Activated naive CD4-positive, alpha-beta T cell treated with anti-CD3 and anti-CD28 coated beads for 36 hours (primary cell): ENCODE measurements at regions of chr7 and their contacts with region 1.

Region 1: GRCh38 chr7:24812310-24812945 is 55.2 kb upstream of the GSDME start:
- DNase-seq: peak; percentile 58
- H3K4me3 Mint-ChIP-seq: no peak overlapping the region
- H3K27ac Mint-ChIP-seq: no peak overlapping the region
- H3K4me1 Mint-ChIP-seq: no peaks in the 10 kb centered on the region
- H3K27me3 Mint-ChIP-seq: no peaks in the 10 kb centered on the region

Region 2: GRCh38 chr7:24701261-24702235 is 110.9 kb before region 1 on chr7:
- CTCF ChIA-PET with region 1: no interaction called
- intact Hi-C with region 1: no loop called
- DNase-seq: no peak
- H3K4me3 Mint-ChIP-seq: no peak overlapping the region
- H3K27ac Mint-ChIP-seq: no peak overlapping the region
- H3K4me1 Mint-ChIP-seq: no peaks in the 10 kb centered on the region
- H3K27me3 Mint-ChIP-seq: no peaks in the 10 kb centered on the region

Region 3: DNA sequence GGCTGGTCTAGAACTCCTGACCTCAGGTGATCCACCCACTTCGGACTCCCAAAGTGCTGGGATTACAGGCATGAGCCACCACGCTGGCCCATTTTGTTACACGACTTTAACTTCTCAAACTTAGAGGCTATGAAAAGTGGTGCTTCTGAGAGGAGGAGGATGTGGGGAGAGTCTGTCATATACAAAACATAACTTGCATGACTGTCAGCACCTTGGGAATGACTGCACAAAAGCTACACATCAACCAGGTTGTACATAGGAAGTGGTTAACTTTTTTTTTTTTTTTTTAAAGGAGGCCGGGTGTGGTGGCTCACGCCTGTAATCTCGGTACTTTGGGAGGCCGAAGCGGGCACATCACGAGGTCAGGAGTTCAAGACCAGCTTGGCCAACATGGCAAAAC is 11.8 kb before region 1 on chr7:
- CTCF ChIA-PET with region 1: interaction called, 16 read pairs
- intact Hi-C with region 1: no loop called
- DNase-seq: no peak
- H3K4me3 Mint-ChIP-seq: no peak overlapping the region
- H3K27ac Mint-ChIP-seq: no peak overlapping the region
- H3K4me1 Mint-ChIP-seq: peaks cover 2% of the 10 kb centered on the region
- H3K27me3 Mint-ChIP-seq: no peaks in the 10 kb centered on the region

Region 4: GRCh38 chr7:25028370-25029021 is 216.1 kb after region 1 on chr7:
- CTCF ChIA-PET with region 1: interaction called, 17 read pairs
- intact Hi-C with region 1: no loop called
- DNase-seq: peak; percentile 38
- H3K4me3 Mint-ChIP-seq: no peak overlapping the region
- H3K27ac Mint-ChIP-seq: peak overlapping the region; percentile 79
- H3K4me1 Mint-ChIP-seq: peaks cover 37% of the 10 kb centered on the region
- H3K27me3 Mint-ChIP-seq: no peaks in the 10 kb centered on the region

Region 5: DNA sequence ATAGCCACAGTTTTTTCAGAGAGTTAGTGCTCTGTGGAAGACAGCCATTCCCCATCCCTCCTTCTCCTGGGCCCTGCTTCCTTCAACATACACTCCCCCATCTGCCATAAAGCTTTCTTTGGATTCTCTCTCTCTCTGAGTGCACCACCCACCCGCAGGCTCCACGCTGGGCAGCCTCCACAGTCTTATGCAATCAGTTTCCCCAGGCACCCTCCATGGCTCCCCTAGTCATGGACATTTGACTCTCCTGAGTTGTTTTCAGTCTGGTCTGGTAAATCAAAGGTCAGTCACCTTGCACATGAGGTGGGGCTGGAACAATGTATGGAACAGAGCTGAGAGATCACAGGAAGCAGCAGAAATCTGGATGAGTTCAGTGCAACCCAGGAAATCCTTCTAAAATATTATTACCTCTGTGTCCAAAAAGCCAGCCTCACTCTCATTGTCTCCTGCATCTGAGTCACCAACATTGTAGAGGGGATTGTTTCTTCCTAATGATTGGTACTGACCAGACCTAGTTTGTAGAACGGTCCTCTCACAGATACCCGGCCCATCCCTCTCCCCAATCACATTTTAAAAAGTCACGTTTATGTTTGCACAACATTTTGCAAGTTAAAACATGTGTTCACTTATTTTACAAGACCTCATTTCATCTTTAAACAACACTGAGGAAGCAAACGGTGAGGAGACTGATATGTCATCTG is 242.5 kb after region 1 on chr7:
- CTCF ChIA-PET with region 1: interaction called, 10 read pairs
- intact Hi-C with region 1: no loop called
- DNase-seq: no peak
- H3K4me3 Mint-ChIP-seq: no peak overlapping the region
- H3K27ac Mint-ChIP-seq: no peak overlapping the region
- H3K4me1 Mint-ChIP-seq: no peaks in the 10 kb centered on the region
- H3K27me3 Mint-ChIP-seq: no peaks in the 10 kb centered on the region

Region 6: DNA sequence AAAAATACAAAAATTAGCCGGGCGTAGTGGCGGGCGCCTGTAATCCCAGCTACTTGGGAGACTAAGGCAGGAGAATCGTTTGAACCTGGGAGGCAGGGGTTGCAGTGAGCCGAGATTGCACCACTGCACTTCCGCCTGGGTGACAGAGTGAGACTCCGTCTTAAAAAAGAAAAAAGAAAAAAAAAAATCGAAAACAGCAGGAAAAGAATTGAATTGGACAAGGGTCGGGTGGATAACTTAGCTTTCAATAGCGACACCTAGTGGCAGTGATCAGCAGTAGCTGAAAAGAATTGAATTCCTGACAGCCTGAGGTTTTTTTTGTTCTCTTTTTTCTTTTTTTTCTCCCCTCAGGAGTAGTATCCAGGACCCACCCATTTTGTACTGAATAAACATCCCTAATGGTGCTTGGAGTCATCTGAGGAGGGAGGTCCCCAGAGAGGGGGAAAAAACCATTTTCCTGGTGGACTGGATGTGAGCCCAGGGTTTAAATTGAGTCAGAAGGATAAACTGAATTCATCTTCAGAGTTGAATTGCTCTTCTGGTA is 257.5 kb after region 1 on chr7:
- CTCF ChIA-PET with region 1: interaction called, 41 read pairs
- intact Hi-C with region 1: loop called (anchors 1 kb)
- DNase-seq: peak; percentile 57
- H3K4me3 Mint-ChIP-seq: no peak overlapping the region
- H3K27ac Mint-ChIP-seq: no peak overlapping the region
- H3K4me1 Mint-ChIP-seq: peaks cover 6% of the 10 kb centered on the region
- H3K27me3 Mint-ChIP-seq: no peaks in the 10 kb centered on the region

Region 7: DNA sequence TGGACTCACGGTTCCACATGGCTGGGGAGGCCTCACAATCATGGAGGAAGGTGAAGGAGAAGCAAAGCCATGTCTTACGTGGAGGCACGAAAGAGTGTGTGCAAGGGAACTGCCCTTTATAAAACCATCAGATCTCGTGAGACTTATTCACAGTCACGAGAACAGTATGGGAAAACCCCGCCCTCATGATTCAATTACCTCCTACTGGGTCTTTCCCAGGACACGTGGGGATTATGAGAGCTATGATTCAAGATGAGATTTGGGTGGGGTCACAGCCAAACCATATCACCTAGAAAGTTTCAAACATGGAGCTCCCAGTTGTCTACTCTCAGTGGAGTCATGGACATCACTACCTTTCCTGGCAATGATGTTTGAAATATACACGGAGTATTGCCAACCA is 263.0 kb after region 1 on chr7:
- CTCF ChIA-PET with region 1: interaction called, 41 read pairs
- intact Hi-C with region 1: loop called (anchors 1 kb)
- DNase-seq: peak; percentile 71
- H3K4me3 Mint-ChIP-seq: no peak overlapping the region
- H3K27ac Mint-ChIP-seq: no peak overlapping the region
- H3K4me1 Mint-ChIP-seq: peaks cover 16% of the 10 kb centered on the region
- H3K27me3 Mint-ChIP-seq: peaks cover 4% of the 10 kb centered on the region

Region 8: GRCh38 chr7:25158966-25159365 is 346.5 kb after region 1 on chr7:
- CTCF ChIA-PET with region 1: interaction called, 3 read pairs
- intact Hi-C with region 1: loop called (anchors 2 kb)
- DNase-seq: no peak
- H3K4me3 Mint-ChIP-seq: no peak overlapping the region
- H3K27ac Mint-ChIP-seq: no peak overlapping the region
- H3K4me1 Mint-ChIP-seq: no peaks in the 10 kb centered on the region
- H3K27me3 Mint-ChIP-seq: no peaks in the 10 kb centered on the region

Region 9: GRCh38 chr7:25469669-25470068 is 657.2 kb after region 1 on chr7:
- CTCF ChIA-PET with region 1: no interaction called
- intact Hi-C with region 1: no loop called
- DNase-seq: no peak
- H3K4me3 Mint-ChIP-seq: no peak overlapping the region
- H3K27ac Mint-ChIP-seq: no peak overlapping the region
- H3K4me1 Mint-ChIP-seq: no peaks in the 10 kb centered on the region
- H3K27me3 Mint-ChIP-seq: peaks cover 6% of the 10 kb centered on the region